BJ (cell line): ENCODE measurements at regions of chr4 and their contacts with region 1.

Region 1: DNA sequence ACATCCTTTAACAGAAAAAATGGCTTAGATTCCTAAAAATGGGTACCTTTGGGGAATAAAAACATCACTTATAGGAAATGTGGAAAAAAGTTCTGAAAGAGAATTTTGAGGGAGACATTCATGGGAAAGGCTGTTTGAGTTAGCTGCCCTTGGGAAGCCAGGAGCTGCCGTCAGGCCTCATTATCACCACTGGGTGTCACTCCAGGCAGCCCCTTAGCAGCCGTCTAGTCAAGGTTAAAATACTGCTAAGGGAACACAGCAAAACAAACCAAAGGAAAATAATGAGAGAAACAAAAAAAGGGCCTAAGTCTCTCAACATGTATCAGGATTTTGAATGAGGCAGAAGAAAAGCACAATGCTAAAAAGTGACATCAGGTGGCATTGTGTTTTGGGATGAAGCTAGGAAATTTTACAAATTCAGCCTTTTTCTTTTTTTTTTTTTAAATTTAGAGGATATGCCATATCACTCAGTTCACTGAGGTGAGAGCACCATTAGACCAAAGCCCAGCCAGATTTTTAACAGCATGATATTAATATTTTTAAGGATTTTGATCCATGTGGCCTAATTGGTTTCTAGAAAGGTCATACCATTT is 235.3 kb downstream of the GPAT3 start:
- DNase-seq: no peak
- H3K4me3 ChIP-seq: no peak overlapping the region
- H3K27me3 ChIP-seq: no peaks in the 10 kb centered on the region
- CTCF ChIP-seq: peak; percentile 83

Region 2: DNA sequence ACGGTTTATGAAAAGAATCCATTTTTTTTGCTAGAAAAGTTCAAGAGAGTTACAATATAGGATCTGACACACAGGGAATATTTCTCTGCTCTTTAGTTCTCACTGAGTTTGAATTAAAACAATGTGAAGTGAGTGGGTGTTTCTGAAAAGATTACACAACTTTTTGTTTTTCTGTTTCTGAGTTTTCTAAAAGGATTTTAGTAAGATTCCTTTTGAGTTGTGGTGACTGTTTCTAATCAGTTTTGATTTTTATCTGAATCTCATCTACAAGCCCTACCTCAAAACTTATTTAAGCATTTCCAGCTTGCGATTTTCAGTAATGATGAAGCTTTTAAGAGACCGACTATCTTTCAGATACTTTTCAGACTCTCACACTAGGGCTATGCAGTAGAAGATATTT is 93.6 kb before region 1 on chr4:
- CTCF ChIA-PET with region 1: no interaction called
- POLR2A ChIA-PET with region 1: no interaction called
- DNase-seq: peak; percentile 82
- H3K4me3 ChIP-seq: no peak overlapping the region
- H3K27me3 ChIP-seq: 0 out of 2 replicates have a peak, but pooled peaks cover 1% of the 10 kb centered on the region
- CTCF ChIP-seq: no peak

Region 3: DNA sequence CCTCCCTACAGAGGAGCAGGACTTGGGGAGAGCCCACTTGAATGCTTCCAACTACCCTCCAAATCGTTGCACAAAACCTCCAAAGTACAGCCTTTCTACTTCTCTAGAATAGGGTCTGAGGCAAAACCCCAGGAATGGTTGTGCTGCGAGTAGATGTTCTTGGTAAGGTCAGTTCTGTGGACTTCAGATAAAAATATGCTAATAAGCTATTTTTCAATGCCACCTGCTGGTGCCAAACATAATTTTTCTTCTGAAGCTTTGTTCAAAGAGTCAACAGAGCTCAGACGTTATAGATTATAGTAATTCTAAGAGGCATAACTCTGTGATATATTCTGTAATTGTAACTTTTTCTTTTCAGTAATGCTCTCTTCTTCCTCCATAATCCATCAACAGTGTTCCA is 190.4 kb after region 1 on chr4:
- CTCF ChIA-PET with region 1: interaction called, 71 read pairs
- POLR2A ChIA-PET with region 1: no interaction called
- DNase-seq: no peak
- H3K4me3 ChIP-seq: no peak overlapping the region
- H3K27me3 ChIP-seq: no peaks in the 10 kb centered on the region
- CTCF ChIP-seq: peak; percentile 35; the same call in 1 of the 2 replicates

Region 4: DNA sequence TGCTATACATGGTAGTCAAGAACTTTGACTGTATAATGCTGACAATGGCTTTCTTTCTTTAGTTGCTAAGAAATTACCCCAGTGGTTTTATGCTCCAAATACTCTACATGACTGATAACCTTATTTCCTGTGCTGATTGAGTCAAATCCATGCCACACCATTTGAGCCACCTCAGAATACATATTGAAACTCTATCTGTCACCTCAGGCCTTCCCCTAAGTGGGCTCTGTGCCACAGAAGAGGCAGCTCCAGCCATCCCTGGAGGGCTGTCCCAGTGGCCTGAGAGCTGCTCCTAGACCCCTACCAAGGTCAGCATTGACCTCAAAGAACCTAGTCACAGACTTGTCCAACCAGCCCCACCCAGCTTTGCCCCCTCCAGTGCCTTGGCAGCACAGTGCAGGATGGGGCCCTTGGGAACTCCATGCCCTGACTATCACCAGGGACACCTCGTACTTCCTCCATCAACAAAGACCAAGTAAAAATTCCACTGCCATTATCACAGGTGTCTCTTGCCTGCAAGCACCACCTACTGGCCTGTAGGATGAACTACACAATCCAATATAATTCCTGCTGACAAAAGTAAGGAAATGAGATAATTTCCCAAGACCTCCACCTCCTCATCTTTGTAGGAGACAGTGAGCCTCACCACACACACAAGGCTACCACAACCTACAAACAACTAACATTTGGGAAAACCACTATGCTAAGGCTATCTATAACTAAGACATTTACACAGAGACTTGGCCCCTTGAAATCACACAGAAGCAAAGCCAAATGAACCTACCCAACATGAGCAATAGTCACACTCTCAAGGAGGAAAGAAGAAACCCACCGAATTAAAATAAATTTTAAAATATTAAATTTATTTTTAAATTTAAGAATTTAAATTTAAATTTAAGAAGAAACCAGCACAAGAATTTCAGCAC is 488.0 kb after region 1 on chr4:
- CTCF ChIA-PET with region 1: interaction called, 12 read pairs
- POLR2A ChIA-PET with region 1: no interaction called
- DNase-seq: no peak
- H3K4me3 ChIP-seq: no peak overlapping the region
- H3K27me3 ChIP-seq: no peaks in the 10 kb centered on the region
- CTCF ChIP-seq: peak; percentile 81